ENCODE measurements at regions of chr12 and their contacts with region 1.

Region 1: GRCh38 chr12:101414533-101415119 is 7.1 kb upstream of the ARL1 start:
- DNase-seq: peak; percentile 19
- H3K4me3 ChIP-seq: no peak overlapping the region
- H3K27ac ChIP-seq: no peak overlapping the region
- H3K4me1 ChIP-seq: no peaks in the 10 kb centered on the region
- H3K27me3 ChIP-seq: no peaks in the 10 kb centered on the region
- CTCF ChIP-seq: peak; percentile 48 to 66 (median 53)
- EP300 ChIP-seq: no peak
- POLR2A ChIP-seq: no peak

Region 2: DNA sequence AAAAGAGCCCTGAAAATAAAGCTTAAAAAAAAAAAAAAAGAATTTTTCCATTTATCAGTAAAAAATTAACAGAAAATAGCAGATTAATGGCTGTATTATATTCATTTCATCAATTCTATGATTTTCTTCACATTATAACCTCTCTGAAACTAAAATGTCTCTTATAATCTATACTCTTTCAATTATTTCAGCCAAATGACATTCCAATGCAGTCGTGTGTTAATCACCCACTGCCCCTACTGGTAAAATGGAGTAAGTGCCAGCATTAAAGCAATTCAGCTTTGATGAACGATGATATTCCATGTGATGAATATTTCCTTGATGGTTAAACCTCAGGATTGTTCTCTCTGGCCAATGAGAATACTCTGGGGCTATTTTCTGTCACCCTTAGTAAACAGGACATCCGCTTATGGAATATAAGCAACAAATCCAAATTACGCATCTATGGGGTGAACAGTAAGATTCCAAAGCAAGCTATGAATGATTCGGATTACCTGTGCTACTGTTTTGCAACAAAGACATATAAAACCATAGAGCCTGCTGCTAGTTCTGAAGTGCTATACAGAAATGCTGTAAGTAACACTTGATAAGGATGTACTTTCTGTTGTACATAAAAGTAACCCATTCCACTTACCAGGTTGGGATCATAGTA is 344.9 kb after region 1 on chr12:
- in situ Hi-C with region 1: loop called in 3 of 4 experiments (anchors 10 to 25 kb)
- intact Hi-C with region 1: no loop called
- DNase-seq: no peak
- H3K4me3 ChIP-seq: no peak overlapping the region
- H3K27ac ChIP-seq: no peak overlapping the region
- H3K4me1 ChIP-seq: peaks cover 0 to 8% (median 1%) of the 10 kb centered on the region in 4 donors
- H3K27me3 ChIP-seq: no peaks in the 10 kb centered on the region
- CTCF ChIP-seq: peak; percentile 69 to 79 (median 72)
- EP300 ChIP-seq: no peak
- POLR2A ChIP-seq: no peak

Measured in transverse colon (tissue), 4 donors.